ENCODE measurements at regions of chr6 and their contacts with region 1.

Region 1: DNA sequence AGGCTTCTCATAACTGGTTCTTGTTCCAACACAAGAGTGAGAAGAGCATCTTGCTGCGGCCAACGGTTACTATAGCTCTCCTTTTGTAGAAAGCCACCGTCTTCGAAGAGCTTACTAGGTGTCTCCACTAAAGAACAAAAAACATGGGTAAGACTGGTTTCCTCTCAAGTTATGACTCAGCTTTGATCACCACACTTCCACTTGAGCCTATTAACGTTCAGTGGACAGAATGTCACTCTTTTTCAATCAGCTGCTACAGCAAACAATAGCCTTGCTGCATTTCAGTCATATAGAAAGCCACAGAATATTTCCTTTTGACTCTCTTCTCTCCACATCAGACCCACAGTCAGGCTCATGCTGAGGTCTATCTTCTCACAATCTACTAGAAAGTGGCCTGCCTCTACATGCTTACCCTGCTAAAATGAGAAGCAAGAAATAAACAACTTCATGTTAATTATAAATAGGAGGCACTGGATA is 243.5 kb upstream of the PREP start:
- DNase-seq: peak in 1 of 9 donors; percentile 36
- ATAC-seq: peak; percentile 81
- H3K4me3 ChIP-seq: no peak overlapping the region
- H3K4me3 Mint-ChIP-seq: peak overlapping the region in 1 of 10 donors; percentile 41
- H3K27ac ChIP-seq: no peak overlapping the region
- H3K27ac Mint-ChIP-seq: peak overlapping the region in 2 of 9 donors; percentile 12 to 83
- H3K4me1 ChIP-seq: peaks cover 0 to 79% of the 10 kb centered on the region in 2 donors
- H3K4me1 Mint-ChIP-seq: peaks cover 30 to 80% (median 44%) of the 10 kb centered on the region in 7 donors
- H3K27me3 ChIP-seq: no peaks in the 10 kb centered on the region
- H3K27me3 Mint-ChIP-seq: peaks cover 0 to 5% (median 0%) of the 10 kb centered on the region in 5 donors

Region 2: GRCh38 chr6:105578179-105578707 is 68.2 kb before region 1 on chr6:
- CTCF ChIA-PET with region 1: no interaction called
- POLR2A ChIA-PET with region 1: no interaction called
- intact Hi-C with region 1: no loop called
- DNase-seq: no peak
- ATAC-seq: no peak
- H3K4me3 ChIP-seq: no peak overlapping the region
- H3K4me3 Mint-ChIP-seq: peak overlapping the region in 1 of 10 donors; percentile 52
- H3K27ac ChIP-seq: no peak overlapping the region
- H3K27ac Mint-ChIP-seq: no peak overlapping the region
- H3K4me1 ChIP-seq: no peaks in the 10 kb centered on the region
- H3K4me1 Mint-ChIP-seq: peaks cover 0 to 8% (median 5%) of the 10 kb centered on the region in 7 donors
- H3K27me3 ChIP-seq: no peaks in the 10 kb centered on the region
- H3K27me3 Mint-ChIP-seq: peaks cover 12 to 42% (median 20%) of the 10 kb centered on the region in 5 donors

Region 3: DNA sequence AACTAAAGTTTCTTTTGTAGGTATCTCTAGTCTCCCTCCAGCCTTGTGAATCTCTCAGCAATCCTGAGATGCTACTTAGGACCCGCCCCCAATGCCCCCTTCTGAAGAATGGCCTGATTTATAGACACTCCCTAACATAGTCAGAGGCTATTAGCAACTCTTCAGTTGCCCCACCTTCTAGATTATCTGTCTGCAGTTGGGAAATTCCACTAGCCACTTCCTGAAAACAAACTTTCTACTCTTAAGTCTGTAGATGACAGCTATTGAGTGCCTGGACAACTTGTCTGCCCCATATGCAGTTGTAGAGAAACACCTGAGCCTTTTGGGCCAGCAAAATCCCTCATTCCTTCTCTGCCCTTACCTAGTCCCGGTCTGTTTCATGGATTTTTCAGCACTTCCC is 55.4 kb before region 1 on chr6:
- CTCF ChIA-PET with region 1: no interaction called
- POLR2A ChIA-PET with region 1: no interaction called
- intact Hi-C with region 1: loop called in 1 of 2 experiments (anchors 1 kb)
- DNase-seq: no peak
- ATAC-seq: peak; percentile 77
- H3K4me3 ChIP-seq: no peak overlapping the region
- H3K4me3 Mint-ChIP-seq: peak overlapping the region in 1 of 10 donors; percentile 46
- H3K27ac ChIP-seq: no peak overlapping the region
- H3K27ac Mint-ChIP-seq: peak overlapping the region in 1 of 9 donors; percentile 61
- H3K4me1 ChIP-seq: peaks cover 0 to 8% of the 10 kb centered on the region in 2 donors
- H3K4me1 Mint-ChIP-seq: peaks cover 10 to 75% (median 28%) of the 10 kb centered on the region in 7 donors
- H3K27me3 ChIP-seq: no peaks in the 10 kb centered on the region
- H3K27me3 Mint-ChIP-seq: peaks cover 0 to 6% (median 0%) of the 10 kb centered on the region in 5 donors

Region 4: GRCh38 chr6:105757512-105758200 is 111.2 kb after region 1 on chr6:
- CTCF ChIA-PET with region 1: no interaction called
- POLR2A ChIA-PET with region 1: no interaction called
- intact Hi-C with region 1: loop called in 1 of 2 experiments (anchors 1 kb)
- DNase-seq: no peak
- ATAC-seq: no peak
- H3K4me3 ChIP-seq: no peak overlapping the region
- H3K4me3 Mint-ChIP-seq: peak overlapping the region in 1 of 10 donors; percentile 69
- H3K27ac ChIP-seq: no peak overlapping the region
- H3K27ac Mint-ChIP-seq: peak overlapping the region in 1 of 9 donors; percentile 84
- H3K4me1 ChIP-seq: peaks cover 0 to 7% of the 10 kb centered on the region in 2 donors
- H3K4me1 Mint-ChIP-seq: peaks cover 0 to 51% (median 0%) of the 10 kb centered on the region in 7 donors
- H3K27me3 ChIP-seq: no peaks in the 10 kb centered on the region
- H3K27me3 Mint-ChIP-seq: peaks cover 0 to 18% (median 0%) of the 10 kb centered on the region in 5 donors

Region 5: GRCh38 chr6:105810105-105810921 is 163.9 kb after region 1 on chr6:
- CTCF ChIA-PET with region 1: no interaction called
- POLR2A ChIA-PET with region 1: no interaction called
- intact Hi-C with region 1: loop called in 1 of 2 experiments (anchors 2 kb)
- DNase-seq: peak in 1 of 9 donors; percentile 69
- ATAC-seq: peak; percentile 72
- H3K4me3 ChIP-seq: no peak overlapping the region
- H3K4me3 Mint-ChIP-seq: peak overlapping the region in 2 of 10 donors; percentile 17 to 61
- H3K27ac ChIP-seq: no peak overlapping the region
- H3K27ac Mint-ChIP-seq: peak overlapping the region in 3 of 9 donors; percentile 26 to 78 (median 55)
- H3K4me1 ChIP-seq: peaks cover 0 to 30% of the 10 kb centered on the region in 2 donors
- H3K4me1 Mint-ChIP-seq: peaks cover 0 to 74% (median 23%) of the 10 kb centered on the region in 7 donors
- H3K27me3 ChIP-seq: no peaks in the 10 kb centered on the region
- H3K27me3 Mint-ChIP-seq: no peaks in the 10 kb centered on the region

Region 6: DNA sequence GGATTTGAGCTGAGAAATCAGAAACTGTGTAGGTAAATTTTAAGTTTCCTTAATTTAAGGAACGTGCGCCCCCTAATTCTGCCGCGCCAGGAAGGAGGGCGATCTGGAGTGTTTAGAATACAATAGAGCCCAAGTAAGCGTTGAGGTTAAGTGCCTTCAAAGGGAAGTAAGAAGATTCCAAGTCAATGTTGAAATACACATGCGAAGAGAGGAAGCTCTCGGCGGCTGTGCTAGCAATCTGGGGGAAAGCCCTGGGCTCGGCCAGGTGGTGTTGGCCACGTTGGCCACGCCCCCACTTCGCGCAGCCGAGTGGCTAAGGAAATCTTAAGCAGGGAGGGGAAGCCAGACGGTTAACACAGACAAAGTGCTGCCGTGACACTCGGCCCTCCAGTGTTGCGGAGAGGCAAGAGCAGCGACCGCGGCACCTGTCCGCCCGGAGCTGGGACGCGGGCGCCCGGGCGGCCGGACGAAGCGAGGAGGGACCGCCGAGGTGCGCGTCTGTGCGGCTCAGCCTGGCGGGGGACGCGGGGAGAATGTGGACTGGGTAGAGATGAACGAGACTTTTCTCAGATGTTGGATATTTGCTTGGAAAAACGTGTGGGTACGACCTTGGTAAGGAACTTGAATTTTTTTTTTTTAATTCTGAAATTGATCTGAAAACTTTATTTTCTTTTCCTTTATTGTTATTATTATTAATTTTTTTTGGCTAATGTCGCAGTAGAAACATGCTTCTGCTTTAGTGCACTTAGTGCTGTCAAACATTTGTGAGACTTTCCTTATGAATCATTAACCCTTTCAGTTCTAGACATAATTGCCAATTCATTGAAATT is 439.8 kb after region 1 on chr6 and contains the start of gene PRDM1:
- CTCF ChIA-PET with region 1: no interaction called
- POLR2A ChIA-PET with region 1: no interaction called
- intact Hi-C with region 1: loop called in 1 of 2 experiments (anchors 1 kb)
- DNase-seq: peak; percentile 33 to 79 (median 53)
- ATAC-seq: peak; percentile 92
- H3K4me3 ChIP-seq: peak within 1 kb of the TSS; percentile 63
- H3K4me3 Mint-ChIP-seq: peak within 1 kb of the TSS; percentile 84 to 96 (median 90)
- H3K27ac ChIP-seq: no peak within 1 kb of the TSS
- H3K27ac Mint-ChIP-seq: peak within 1 kb of the TSS; percentile 37 to 92 (median 78)
- H3K4me1 ChIP-seq: peaks cover 50 to 60% of the 10 kb centered on the region in 2 donors
- H3K4me1 Mint-ChIP-seq: peaks cover 50 to 89% (median 76%) of the 10 kb centered on the region in 7 donors
- H3K27me3 ChIP-seq: peaks cover 0 to 14% of the 10 kb centered on the region in 2 donors
- H3K27me3 Mint-ChIP-seq: peaks cover 10 to 47% (median 18%) of the 10 kb centered on the region in 5 donors
- total RNA-seq, gene PRDM1: 2.0 to 64.1 (median 22.6) TPM

Region 7: GRCh38 chr6:106194949-106195921 is 548.8 kb after region 1 on chr6:
- CTCF ChIA-PET with region 1: no interaction called
- POLR2A ChIA-PET with region 1: no interaction called
- intact Hi-C with region 1: loop called in 1 of 2 experiments (anchors 10 kb)
- DNase-seq: peak in 7 of 9 donors; percentile 43 to 70 (median 57)
- ATAC-seq: peak; percentile 81
- H3K4me3 ChIP-seq: peak overlapping the region; percentile 21
- H3K4me3 Mint-ChIP-seq: peak overlapping the region; percentile 19 to 80 (median 71)
- H3K27ac ChIP-seq: peak overlapping the region; percentile 30
- H3K27ac Mint-ChIP-seq: peak overlapping the region; percentile 64 to 91 (median 84)
- H3K4me1 ChIP-seq: peaks cover 30 to 36% of the 10 kb centered on the region in 2 donors
- H3K4me1 Mint-ChIP-seq: peaks cover 24 to 54% (median 41%) of the 10 kb centered on the region in 7 donors
- H3K27me3 ChIP-seq: no peaks in the 10 kb centered on the region
- H3K27me3 Mint-ChIP-seq: no peaks in the 10 kb centered on the region

Region 8: GRCh38 chr6:107488875-107489635 is 1842.6 kb after region 1 on chr6:
- CTCF ChIA-PET with region 1: no interaction called
- POLR2A ChIA-PET with region 1: no interaction called
- intact Hi-C with region 1: no loop called
- DNase-seq: peak in 5 of 9 donors; percentile 7 to 29 (median 17)
- ATAC-seq: peak; percentile 12
- H3K4me3 ChIP-seq: peak overlapping the region; percentile 40
- H3K4me3 Mint-ChIP-seq: peak overlapping the region; percentile 85 to 95 (median 89)
- H3K27ac ChIP-seq: no peak overlapping the region
- H3K27ac Mint-ChIP-seq: peak overlapping the region in 2 of 9 donors; percentile 39 to 54
- H3K4me1 ChIP-seq: peaks cover 9 to 15% of the 10 kb centered on the region in 2 donors
- H3K4me1 Mint-ChIP-seq: peaks cover 11 to 22% (median 20%) of the 10 kb centered on the region in 7 donors
- H3K27me3 ChIP-seq: peaks cover 18 to 23% of the 10 kb centered on the region in 2 donors
- H3K27me3 Mint-ChIP-seq: peaks cover 39 to 54% (median 45%) of the 10 kb centered on the region in 5 donors